SK-N-SH (cell line): ENCODE measurements at regions of chr4 and their contacts with region 1.

Region 1: DNA sequence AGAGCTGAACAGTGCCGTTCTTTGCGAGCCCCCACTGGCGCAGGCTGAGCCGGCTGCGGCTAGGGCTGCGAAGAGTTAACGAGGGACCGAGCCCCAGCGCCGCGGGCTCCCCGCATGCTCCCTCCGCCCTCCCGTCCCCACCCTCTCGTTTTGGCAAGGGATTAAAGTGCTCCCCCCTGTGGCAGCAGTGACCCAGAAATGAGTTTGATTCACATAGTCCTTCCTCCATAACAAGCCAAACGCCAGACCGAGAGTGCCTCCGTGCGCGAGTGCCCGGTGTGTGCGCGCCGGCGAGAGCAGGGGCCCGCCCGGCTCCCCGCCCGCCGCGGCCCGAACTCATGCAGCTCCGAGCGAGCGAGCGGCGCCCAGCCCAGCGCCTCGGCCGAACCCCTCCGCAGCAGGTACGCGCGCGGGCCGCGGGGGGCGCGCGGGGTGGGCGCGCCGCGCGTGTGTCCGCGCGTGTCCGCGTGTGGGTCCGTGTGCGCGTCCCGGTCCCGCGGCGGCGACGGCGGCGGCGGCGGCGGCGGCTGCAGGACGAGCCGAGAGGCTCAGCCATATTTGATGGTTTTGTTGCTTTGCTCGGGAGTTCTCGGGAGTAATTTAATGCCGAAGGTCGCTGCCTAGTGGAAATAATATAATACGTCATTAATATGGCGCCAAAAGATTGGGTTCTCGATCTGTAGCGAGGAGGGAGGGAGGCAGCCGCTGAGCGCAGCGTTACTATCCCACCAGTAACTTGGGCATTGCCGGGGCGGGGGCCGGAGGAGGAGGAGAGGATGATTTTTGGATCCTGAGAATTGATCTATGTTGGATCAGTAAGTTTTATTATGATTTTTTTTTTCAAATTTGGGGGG is at the start of gene JADE1:
- DNase-seq: peak; percentile 92
- H3K4me3 ChIP-seq: peak within 1 kb of the TSS; percentile 88 to 97
- H3K27ac ChIP-seq: peak within 1 kb of the TSS; percentile 94 to 97
- H3K4me1 ChIP-seq: peaks cover 4 to 7% of the 10 kb centered on the region in 2 experiments; a peak in 3 of 4 replicates
- H3K27me3 ChIP-seq: no peaks in the 10 kb centered on the region
- CTCF ChIP-seq: peak; percentile 69
- EP300 ChIP-seq: no peak; a peak in 1 of 4 replicates
- RAD21 ChIP-seq: peak; percentile 88
- polyA plus RNA-seq, gene JADE1: 9.1 and 10.9 TPM in 2 replicates

Region 2: DNA sequence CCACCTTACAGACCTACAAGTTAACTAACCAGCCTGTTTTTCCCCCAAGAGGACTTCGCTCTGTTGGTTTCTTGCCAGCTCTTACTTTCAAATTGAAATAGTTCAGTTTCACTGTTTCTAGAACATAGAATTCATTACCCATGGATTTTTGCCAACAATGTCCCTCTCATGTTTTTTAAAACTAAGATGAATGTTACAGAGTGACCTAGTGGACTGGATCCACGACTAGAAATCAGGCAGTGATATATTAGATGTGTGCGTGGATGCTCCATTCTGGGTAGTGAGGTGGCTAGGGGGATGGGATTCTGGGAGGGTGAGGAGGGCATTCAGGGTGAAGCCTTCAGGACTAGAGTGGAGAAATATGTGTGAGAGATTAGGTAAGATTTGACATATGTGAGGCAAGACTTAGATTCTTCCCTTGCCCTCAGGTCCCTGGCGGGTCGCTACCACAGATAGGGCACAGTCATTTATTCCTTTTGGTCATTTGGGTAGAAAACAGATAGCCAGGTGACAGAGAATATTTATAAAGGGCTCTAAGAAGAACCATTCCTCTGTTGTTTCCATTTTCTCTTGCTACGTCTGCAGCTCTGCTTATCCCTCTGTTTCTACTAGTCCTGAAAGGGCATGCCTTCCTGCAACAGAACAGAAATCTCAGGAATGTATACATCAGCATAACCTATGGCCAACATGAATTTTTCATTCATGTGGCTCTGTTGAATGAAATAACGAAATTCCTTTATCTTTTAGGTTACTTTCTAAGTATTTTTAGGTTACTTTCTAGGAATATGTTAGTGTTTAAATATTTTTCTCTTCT is 15.6 kb before region 1 on chr4:
- CTCF ChIA-PET with region 1: no interaction called
- POLR2A ChIA-PET with region 1: no interaction called
- DNase-seq: no peak
- H3K4me3 ChIP-seq: no peak overlapping the region
- H3K27ac ChIP-seq: no peak overlapping the region
- H3K4me1 ChIP-seq: no peaks in the 10 kb centered on the region
- H3K27me3 ChIP-seq: no peaks in the 10 kb centered on the region
- CTCF ChIP-seq: no peak
- EP300 ChIP-seq: no peak
- RAD21 ChIP-seq: no peak

Region 3: GRCh38 chr4:128863312-128864075 is 53.8 kb after region 1 on chr4:
- CTCF ChIA-PET with region 1: interaction called, 11 read pairs
- POLR2A ChIA-PET with region 1: interaction called, 3 read pairs
- DNase-seq: peak; percentile 70
- H3K4me3 ChIP-seq: peak overlapping the region in 1 of 2 experiments; percentile 21; a peak in 1 of 4 replicates
- H3K27ac ChIP-seq: peak overlapping the region in 1 of 2 experiments; percentile 12; a peak in 1 of 4 replicates
- H3K4me1 ChIP-seq: peaks cover 0 to 23% of the 10 kb centered on the region in 2 experiments; a peak in 1 of 4 replicates
- H3K27me3 ChIP-seq: no peaks in the 10 kb centered on the region
- CTCF ChIP-seq: peak; percentile 91
- EP300 ChIP-seq: no peak
- RAD21 ChIP-seq: peak; percentile 80